ENCODE measurements at regions of chrX and their contacts with region 1.

Region 1: GRCh38 chrX:24054182-24055042 is at the start of gene EIF2S3:
- DNase-seq: peak; percentile 91
- ATAC-seq: peak; percentile 89
- H3K4me3 Mint-ChIP-seq: no peak within 1 kb of the TSS
- H3K27ac Mint-ChIP-seq: peak within 1 kb of the TSS; percentile 100
- H3K4me1 Mint-ChIP-seq: peaks cover 6% of the 10 kb centered on the region
- H3K27me3 Mint-ChIP-seq: no peaks in the 10 kb centered on the region
- total RNA-seq, gene EIF2S3: 187 to 197 TPM

Region 2: GRCh38 chrX:24024819-24025740 is 29.3 kb before region 1 on chrX:
- CTCF ChIA-PET with region 1: interaction called, 31 read pairs
- POLR2A ChIA-PET with region 1: interaction called, 24 read pairs
- DNase-seq: peak; percentile 89
- ATAC-seq: peak; percentile 91
- H3K4me3 Mint-ChIP-seq: peak overlapping the region; percentile 89
- H3K27ac Mint-ChIP-seq: peak overlapping the region; percentile 86
- H3K4me1 Mint-ChIP-seq: peaks cover 27% of the 10 kb centered on the region
- H3K27me3 Mint-ChIP-seq: no peaks in the 10 kb centered on the region